Naive thymus-derived CD4-positive, alpha-beta T cell (primary cell): ENCODE measurements at regions of chr9 and their contacts with region 1.

Region 1: DNA sequence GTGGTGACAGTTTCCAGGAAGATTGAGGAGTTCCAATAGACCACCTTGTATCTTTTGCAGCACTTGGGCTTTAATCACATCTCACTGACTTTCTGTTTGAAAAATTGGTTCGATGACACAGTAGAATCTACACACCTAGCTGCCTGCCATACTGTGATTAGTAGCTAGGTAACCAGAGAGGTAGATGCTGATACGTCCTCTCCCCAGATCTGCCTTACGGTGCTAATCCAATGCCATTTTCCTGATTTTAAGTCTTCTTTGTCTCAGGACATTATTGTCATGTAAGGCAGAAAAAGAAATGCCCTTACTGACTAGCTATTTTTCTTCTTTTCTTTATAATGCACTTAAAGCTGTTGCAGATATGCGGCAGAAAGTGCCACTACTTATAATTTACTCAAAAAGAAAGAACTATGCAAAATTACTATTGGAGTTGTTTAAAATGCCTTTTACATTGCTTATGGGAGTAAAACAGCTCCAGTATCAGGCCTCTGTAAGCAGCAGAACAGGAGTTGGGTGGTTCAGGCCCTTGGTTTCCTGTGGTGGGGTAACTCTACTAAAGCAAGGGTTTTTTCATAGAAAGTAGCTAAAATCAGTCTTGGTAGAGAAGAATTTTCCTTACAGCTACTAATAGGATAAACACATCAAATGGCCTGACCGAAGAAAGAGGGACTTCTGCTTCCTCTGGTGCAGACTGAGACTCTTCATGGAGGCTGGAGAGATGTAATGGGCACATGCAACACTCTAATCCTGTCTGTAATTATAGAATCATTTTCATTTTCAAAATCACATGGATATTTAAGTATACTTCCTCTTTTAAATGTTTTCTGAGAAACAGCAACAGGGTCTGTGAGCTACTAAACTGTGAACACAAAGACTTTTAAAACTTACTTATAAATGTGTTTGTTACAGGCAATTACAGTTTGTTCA is 177.2 kb downstream of the MAPKAP1 start:
- DNase-seq: no peak
- ATAC-seq: peak; percentile 48
- H3K4me3 ChIP-seq: no peak overlapping the region
- H3K4me3 Mint-ChIP-seq: peak overlapping the region in 1 of 10 donors; percentile 0
- H3K27ac ChIP-seq: no peak overlapping the region
- H3K27ac Mint-ChIP-seq: peak overlapping the region in 4 of 9 donors; percentile 9 to 79 (median 30)
- H3K4me1 ChIP-seq: no peaks in the 10 kb centered on the region
- H3K4me1 Mint-ChIP-seq: peaks cover 5 to 48% (median 32%) of the 10 kb centered on the region in 7 donors
- H3K27me3 ChIP-seq: no peaks in the 10 kb centered on the region
- H3K27me3 Mint-ChIP-seq: no peaks in the 10 kb centered on the region

Region 2: DNA sequence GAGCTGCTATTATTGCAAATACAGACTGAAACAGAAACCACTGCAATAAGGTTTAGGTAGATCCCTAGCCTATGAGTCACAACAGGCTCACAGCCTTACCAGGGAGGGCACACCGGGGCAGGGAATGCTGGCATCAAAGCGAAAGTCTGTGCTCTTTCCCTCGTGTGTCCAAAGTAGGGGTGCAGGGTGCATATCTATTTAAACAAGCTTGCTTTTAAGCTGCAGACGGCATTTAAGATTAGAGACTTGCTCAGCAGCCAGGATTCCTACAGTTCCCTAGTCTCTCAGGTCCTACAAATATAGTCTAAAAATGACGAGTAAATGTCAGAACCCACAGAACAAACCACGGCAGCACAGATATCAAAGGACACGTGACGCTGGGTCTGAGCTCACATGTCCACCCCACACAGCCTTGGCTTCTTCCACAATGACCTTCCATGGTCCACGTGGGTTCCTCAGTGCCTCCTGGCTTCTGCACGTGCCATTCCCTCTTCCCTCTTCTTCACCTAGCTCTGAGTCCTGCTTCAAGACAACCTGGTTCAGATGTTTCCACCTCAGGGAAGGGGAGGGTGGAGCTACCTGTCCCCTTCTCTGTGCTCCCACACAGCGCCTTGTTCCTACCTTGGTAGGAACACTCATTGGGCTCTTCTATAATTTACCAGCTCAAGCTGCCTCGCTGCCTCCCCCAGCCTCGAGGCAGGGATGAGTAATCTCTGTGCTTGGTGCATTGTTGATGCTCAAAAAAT is 16.0 kb before region 1 on chr9:
- CTCF ChIA-PET with region 1: interaction called, 4 read pairs
- POLR2A ChIA-PET with region 1: no interaction called
- intact Hi-C with region 1: loop called in 1 of 2 experiments (anchors 2 kb)
- DNase-seq: peak in 1 of 9 donors; percentile 35
- ATAC-seq: no peak
- H3K4me3 ChIP-seq: no peak overlapping the region
- H3K4me3 Mint-ChIP-seq: peak overlapping the region in 1 of 10 donors; percentile 61
- H3K27ac ChIP-seq: no peak overlapping the region
- H3K27ac Mint-ChIP-seq: peak overlapping the region in 2 of 9 donors; percentile 72 to 84
- H3K4me1 ChIP-seq: no peaks in the 10 kb centered on the region
- H3K4me1 Mint-ChIP-seq: peaks cover 0 to 17% (median 4%) of the 10 kb centered on the region in 7 donors
- H3K27me3 ChIP-seq: no peaks in the 10 kb centered on the region
- H3K27me3 Mint-ChIP-seq: no peaks in the 10 kb centered on the region

Region 3: DNA sequence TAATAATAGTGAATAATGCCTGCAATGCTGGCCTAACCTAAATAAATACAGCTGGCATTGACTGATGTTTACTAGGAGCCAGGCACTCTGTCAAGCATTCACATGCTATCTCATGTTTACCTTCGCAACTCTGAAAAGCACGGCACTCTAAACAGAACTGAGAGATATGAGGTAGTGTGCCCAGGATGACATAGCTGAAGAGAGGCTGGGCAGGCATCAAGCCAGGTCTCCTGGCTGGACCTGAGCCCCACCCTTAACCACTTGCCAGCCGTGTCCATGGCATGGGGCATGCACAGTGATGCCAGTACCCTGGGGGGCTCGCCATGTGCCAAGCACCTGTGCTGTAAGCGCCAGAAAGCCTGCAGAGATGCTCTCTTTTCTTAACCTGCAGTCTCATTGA is 677.4 kb after region 1 on chr9:
- CTCF ChIA-PET with region 1: no interaction called
- POLR2A ChIA-PET with region 1: no interaction called
- intact Hi-C with region 1: no loop called
- DNase-seq: no peak
- ATAC-seq: no peak
- H3K4me3 ChIP-seq: no peak overlapping the region
- H3K4me3 Mint-ChIP-seq: no peak overlapping the region
- H3K27ac ChIP-seq: no peak overlapping the region
- H3K27ac Mint-ChIP-seq: no peak overlapping the region
- H3K4me1 ChIP-seq: no peaks in the 10 kb centered on the region
- H3K4me1 Mint-ChIP-seq: no peaks in the 10 kb centered on the region
- H3K27me3 ChIP-seq: no peaks in the 10 kb centered on the region
- H3K27me3 Mint-ChIP-seq: peaks cover 0 to 27% (median 16%) of the 10 kb centered on the region in 5 donors